Tibial artery (tissue), 4 donors: ENCODE measurements at regions of chr9 and their contacts with region 1.

Region 1: DNA sequence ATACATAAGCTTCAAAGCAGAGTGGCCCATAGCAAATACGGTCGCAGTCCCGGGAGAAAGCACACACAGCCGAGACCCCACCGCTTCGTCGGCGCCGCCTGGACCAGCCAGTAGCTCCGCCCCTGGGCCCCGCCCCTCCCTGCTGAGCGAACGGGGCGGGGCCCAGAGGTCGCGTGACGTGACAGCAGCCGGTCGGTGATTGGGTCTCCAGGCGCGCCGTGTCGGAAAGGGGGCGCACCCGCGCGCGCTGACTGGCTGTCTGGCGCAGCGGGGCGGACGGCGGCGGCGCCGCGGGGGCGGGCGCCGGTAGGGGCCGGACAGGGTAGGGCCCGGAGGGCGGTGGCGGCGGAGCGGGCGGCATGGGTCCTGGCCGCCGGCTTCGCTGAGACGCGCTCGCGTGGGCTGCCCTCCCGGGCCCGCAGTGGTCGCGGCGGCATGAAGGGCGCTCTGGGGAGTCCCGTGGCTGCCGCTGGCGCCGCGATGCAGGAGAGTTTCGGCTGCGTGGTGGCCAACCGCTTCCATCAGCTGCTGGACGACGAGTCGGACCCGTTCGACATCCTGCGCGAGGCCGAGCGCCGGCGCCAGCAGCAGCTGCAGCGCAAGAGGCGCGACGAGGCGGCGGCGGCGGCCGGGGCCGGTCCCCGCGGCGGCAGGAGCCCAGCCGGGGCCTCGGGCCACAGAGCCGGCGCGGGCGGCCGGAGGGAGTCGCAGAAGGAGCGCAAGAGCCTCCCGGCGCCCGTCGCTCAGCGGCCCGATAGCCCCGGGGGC is at the start of gene HABP4:
- DNase-seq: peak; percentile 97 to 98
- H3K4me3 ChIP-seq: peak within 1 kb of the TSS; percentile 72 to 73
- H3K27ac ChIP-seq: peak within 1 kb of the TSS; percentile 88
- H3K4me1 ChIP-seq: peaks cover 0 to 47% (median 14%) of the 10 kb centered on the region in 4 donors
- H3K27me3 ChIP-seq: no peaks in the 10 kb centered on the region
- CTCF ChIP-seq: peak in 1 of 2 experiments; percentile 21

Region 2: DNA sequence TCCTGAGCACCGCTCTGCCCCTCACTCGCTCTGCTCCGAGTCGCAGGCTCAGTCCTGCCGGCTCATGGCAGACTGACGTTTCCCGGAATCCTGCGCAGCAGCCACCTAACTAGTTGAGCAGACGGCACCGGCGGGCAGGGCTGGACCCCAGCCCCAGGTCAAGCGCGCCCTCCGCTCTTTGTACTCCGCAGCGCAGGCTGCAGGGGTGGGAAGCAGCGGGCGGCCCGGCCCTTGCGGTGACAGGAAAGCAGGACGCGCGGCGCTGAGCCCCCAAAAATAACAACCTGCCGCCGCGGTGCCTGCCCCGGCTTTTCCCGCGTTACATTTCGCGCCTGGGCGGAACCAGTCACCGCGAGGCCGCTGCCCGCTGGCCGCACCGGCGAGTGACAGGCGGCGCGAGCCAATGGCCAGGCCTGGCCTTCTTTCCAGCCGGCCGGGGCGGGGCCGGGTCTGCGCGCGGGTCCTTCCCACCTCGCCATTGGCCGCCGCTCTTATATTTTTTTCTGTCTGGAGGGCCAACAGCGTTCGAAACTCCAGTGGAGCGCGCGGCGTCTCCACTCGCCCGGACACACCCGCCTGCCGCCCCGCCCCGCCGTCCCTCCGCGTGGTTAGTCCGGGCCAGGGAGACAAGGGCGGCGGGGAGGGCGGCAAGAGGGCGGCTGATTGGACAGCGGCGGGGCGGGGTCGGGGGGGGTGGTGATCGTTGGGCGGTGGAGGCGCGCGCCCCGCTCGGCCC is 31.8 kb before region 1 on chr9 and contains the start of gene ZNF367:
- intact Hi-C with region 1: loop called (anchors 2 kb)
- DNase-seq: peak; percentile 98 to 99
- H3K4me3 ChIP-seq: peak within 1 kb of the TSS; percentile 67 to 75
- H3K27ac ChIP-seq: peak within 1 kb of the TSS; percentile 95 to 98
- H3K4me1 ChIP-seq: peaks cover 11 to 34% (median 25%) of the 10 kb centered on the region in 4 donors
- H3K27me3 ChIP-seq: no peaks in the 10 kb centered on the region
- CTCF ChIP-seq: peak in 1 of 2 experiments; percentile 4

Region 3: DNA sequence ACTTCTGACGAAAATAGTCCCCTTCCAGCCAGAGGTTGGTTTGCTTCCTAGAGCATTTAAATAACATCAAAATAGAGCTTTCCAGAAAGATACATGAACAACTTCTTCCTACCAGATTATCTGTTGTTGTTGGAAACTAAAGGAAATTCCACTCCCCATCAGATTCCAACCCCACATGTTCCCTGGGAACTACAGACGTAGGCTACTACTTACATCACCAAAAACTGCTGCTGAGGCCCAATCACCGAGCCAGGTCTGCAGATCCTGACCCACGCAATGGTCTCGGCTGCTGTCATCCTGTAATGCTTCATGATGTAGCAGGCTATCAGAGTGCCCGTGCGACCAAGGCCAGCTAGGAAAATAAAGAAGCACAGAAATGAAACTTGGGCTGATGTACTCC is 73.3 kb after region 1 on chr9:
- intact Hi-C with region 1: no loop called
- DNase-seq: peak; percentile 78 to 93
- H3K4me3 ChIP-seq: peak overlapping the region; percentile 35 to 47
- H3K27ac ChIP-seq: peak overlapping the region; percentile 85 to 86
- H3K4me1 ChIP-seq: peaks cover 6 to 67% (median 31%) of the 10 kb centered on the region in 4 donors
- H3K27me3 ChIP-seq: no peaks in the 10 kb centered on the region
- CTCF ChIP-seq: no peak

Region 4: DNA sequence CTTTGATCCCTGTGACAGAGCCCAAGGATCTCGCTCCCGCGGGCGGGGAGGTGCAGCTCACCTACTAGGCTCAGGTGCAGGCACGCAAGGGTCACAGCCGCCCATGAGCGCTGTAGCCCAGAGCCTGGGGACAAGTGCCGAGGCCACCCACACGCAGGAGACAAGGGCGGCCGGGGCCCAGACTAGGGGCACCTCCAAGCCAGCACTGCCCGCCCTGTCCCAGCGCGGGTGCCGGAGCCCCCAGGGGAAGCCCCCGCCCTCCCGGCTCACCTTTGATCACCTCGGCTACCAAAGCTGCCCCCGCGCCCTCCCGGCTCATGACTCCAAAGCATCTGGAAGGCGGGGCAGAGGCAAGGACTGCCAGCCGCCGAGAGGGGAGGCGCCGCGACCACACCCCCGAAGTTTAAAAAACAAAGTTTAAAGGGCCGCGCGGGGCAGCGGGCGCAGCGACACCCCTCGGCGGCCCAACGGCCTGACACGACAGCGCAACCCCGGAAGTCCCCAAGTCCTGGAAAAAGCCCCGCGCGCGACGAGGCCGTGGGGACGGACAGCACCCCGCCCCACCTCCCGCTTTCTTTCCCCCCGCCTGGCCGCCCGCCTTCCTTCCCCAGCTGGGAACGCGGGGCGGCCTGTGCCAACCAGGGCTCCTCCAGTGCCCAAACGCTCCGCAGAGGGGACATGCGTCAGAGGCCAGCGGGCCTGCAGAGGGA is 116.6 kb after region 1 on chr9:
- intact Hi-C with region 1: loop called (anchors 2 kb)
- DNase-seq: peak; percentile 81 to 94
- H3K4me3 ChIP-seq: peak overlapping the region; percentile 77 to 91
- H3K27ac ChIP-seq: peak overlapping the region; percentile 94 to 97
- H3K4me1 ChIP-seq: peaks cover 0 to 38% (median 9%) of the 10 kb centered on the region in 4 donors
- H3K27me3 ChIP-seq: no peaks in the 10 kb centered on the region
- CTCF ChIP-seq: peak; percentile 60 to 65

Region 5: DNA sequence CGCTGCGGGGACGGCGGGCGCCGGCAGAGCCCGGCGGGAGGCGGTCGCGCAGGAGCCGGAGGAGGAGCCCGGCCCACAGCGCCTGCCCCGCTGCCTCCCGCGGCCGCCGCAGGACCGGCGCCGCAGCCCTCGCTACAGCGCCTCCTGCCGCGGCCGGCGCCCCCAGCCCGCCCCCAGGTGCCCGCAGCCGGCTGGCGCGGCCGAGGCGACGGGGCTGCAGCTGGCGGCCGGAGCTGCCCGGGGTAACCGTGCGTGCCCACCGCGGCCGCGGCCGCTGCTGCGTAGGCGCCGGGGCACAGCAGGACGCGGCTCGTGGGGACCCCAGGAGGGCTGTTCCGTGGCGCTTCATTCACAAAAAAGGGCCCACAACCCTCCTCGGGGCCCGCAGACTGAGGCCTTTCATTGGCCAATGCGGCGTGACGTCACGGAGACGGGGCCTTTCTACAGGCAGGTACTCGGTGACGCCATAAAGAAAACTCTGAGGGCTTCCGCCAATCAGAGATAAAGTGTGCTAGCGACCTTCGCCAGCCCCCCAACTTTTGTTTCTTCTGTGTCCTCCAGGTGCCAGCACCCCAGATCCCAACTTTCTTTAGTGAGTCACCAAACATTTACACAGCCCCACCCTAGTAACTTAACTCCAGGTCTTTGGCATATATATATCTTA is 169.6 kb after region 1 on chr9 and contains the start of gene CDC14B:
- intact Hi-C with region 1: loop called (anchors 10 kb)
- DNase-seq: peak; percentile 81 to 93
- H3K4me3 ChIP-seq: peak within 1 kb of the TSS; percentile 71 to 87
- H3K27ac ChIP-seq: peak within 1 kb of the TSS; percentile 86 to 88
- H3K4me1 ChIP-seq: peaks cover 0 to 7% (median 2%) of the 10 kb centered on the region in 4 donors
- H3K27me3 ChIP-seq: no peaks in the 10 kb centered on the region
- CTCF ChIP-seq: peak in 1 of 2 experiments; percentile 40

Region 6: DNA sequence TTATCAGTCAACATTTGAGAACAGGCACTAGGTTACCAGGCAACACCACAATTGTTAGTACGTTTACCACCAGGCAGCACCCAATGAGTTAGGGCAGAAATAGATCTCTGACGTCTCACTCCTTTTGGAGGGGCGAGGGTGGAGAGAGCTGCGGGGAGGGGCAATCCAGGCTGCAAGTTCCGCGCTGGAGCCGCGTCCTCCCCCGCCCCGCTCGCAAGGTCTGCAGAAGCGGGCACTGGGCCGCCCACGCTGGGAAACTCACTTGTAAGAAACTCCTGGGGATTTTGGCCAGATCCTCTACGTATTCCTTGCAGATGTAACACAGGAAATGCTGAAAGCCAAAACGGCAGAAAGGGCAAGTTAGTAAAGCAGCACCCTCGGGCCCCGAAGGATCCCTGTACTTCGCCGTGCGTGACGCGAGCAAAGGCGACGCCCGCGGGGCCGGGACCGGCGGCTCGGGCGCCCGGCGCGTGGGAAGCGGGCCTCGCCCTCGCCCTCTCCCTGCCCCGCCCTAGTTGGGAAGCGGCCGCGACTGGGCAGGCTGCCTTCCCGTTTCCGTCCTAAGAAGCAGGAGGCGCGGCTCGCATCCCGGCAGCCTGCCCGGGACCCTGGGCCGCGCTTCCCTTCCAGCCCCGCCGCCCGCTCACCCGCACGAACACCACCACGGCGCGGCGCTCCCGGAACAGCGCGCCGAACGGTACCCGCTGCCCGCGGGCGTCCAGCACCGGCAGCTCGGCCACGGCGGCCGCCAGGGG is 204.6 kb after region 1 on chr9:
- intact Hi-C with region 1: loop called (anchors 10 kb)
- DNase-seq: peak; percentile 83 to 95
- H3K4me3 ChIP-seq: peak overlapping the region; percentile 66 to 82
- H3K27ac ChIP-seq: peak overlapping the region; percentile 99 to 100
- H3K4me1 ChIP-seq: peaks cover 0 to 20% (median 6%) of the 10 kb centered on the region in 4 donors
- H3K27me3 ChIP-seq: no peaks in the 10 kb centered on the region
- CTCF ChIP-seq: peak in 1 of 2 experiments; percentile 44

Region 7: GRCh38 chr9:96751815-96752214 is 301.8 kb after region 1 on chr9:
- intact Hi-C with region 1: no loop called
- DNase-seq: no peak
- H3K4me3 ChIP-seq: no peak overlapping the region
- H3K27ac ChIP-seq: no peak overlapping the region
- H3K4me1 ChIP-seq: no peaks in the 10 kb centered on the region
- H3K27me3 ChIP-seq: no peaks in the 10 kb centered on the region
- CTCF ChIP-seq: no peak